AG04450 (cell line): ENCODE measurements at regions of chr7 and their contacts with region 1.

Region 1: GRCh38 chr7:12686894-12687717 is at the start of gene ARL4A:
- DNase-seq: peak; percentile 96
- H3K4me3 ChIP-seq: peak within 1 kb of the TSS; percentile 88
- H3K27ac ChIP-seq: peak within 1 kb of the TSS; percentile 79
- H3K27me3 ChIP-seq: no peaks in the 10 kb centered on the region
- CTCF ChIP-seq: peak; percentile 29; the same call in 1 of the 2 replicates
- polyA plus RNA-seq, gene ARL4A: 18.3 and 31.0 TPM in 2 replicates

Region 2: GRCh38 chr7:11261519-11261958 is 1425.6 kb before region 1 on chr7:
- CTCF ChIA-PET with region 1: no interaction called
- POLR2A ChIA-PET with region 1: no interaction called
- DNase-seq: no peak
- H3K4me3 ChIP-seq: no peak overlapping the region
- H3K27ac ChIP-seq: no peak overlapping the region
- H3K27me3 ChIP-seq: no peaks in the 10 kb centered on the region
- CTCF ChIP-seq: no peak

Region 3: DNA sequence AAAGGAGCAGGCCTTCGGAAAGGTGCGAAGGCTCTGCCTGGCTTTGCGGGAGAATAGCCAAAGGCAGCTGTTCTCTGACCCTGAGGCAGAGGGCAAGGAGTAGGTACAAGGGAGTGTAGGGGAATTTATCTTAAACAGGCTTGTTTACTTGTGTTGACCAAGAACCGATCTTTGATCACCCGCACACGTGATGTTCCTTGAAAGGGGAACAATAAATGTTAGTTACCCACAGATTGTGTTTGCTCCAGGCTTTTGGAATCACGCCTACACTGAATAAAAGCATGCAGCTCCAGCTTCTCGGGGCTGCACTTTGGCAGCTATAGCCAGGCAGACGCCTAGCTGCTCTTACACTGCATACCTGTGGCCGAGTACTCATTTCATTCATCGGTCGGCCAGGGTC is 1292.7 kb before region 1 on chr7:
- CTCF ChIA-PET with region 1: no interaction called
- POLR2A ChIA-PET with region 1: no interaction called
- DNase-seq: no peak
- H3K4me3 ChIP-seq: no peak overlapping the region
- H3K27ac ChIP-seq: no peak overlapping the region
- H3K27me3 ChIP-seq: no peaks in the 10 kb centered on the region
- CTCF ChIP-seq: no peak

Region 4: DNA sequence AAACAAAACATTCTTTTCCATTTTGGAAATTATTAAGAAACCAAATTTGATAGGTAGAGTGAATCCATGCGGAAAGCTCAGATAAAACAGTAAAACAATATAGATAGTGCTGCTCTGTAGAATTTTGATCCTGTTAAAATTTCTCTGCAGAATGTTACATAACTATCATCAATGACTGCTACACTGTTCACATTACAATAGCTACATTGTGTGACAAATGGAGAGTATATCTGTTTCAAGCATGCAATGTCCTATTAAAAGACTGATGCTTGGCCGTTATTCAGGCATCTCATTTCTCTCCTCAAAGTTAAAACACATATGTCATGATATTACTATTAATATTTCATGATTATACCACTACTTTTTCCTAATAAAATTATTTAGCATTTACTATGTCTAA is 490.7 kb before region 1 on chr7:
- CTCF ChIA-PET with region 1: no interaction called
- POLR2A ChIA-PET with region 1: no interaction called
- DNase-seq: no peak
- H3K4me3 ChIP-seq: no peak overlapping the region
- H3K27ac ChIP-seq: no peak overlapping the region
- H3K27me3 ChIP-seq: no peaks in the 10 kb centered on the region
- CTCF ChIP-seq: no peak

Region 5: DNA sequence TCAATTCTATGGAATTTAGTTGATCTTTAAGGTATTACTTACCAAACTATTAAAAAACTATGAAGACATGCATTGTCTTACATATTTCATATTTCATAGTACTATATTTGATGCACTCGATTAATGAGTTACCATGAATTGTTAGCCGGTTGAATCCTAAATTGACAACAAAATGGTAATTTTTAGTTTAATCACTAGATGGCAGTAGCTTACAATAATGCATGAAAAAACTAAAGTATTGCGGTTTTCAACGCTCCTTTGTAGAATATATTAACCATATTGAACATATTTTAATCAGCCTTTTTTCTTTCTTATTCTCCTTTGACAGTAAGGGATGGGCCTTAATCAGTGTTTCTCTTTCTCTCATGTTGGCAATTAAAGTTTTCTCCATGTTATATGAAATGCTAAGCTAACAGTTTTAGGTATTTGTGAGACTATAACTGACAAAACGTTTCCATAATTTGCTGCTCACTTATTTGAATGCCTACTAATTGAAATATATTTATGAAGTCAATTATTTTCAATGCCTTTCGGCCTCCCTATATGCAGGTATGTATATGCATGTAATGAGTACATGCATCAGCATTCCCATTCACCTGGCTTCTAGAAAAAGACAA is 48.1 kb before region 1 on chr7:
- CTCF ChIA-PET with region 1: interaction called, 22 read pairs
- POLR2A ChIA-PET with region 1: no interaction called
- DNase-seq: no peak
- H3K4me3 ChIP-seq: no peak overlapping the region
- H3K27ac ChIP-seq: no peak overlapping the region
- H3K27me3 ChIP-seq: no peaks in the 10 kb centered on the region
- CTCF ChIP-seq: peak; percentile 62

Region 6: DNA sequence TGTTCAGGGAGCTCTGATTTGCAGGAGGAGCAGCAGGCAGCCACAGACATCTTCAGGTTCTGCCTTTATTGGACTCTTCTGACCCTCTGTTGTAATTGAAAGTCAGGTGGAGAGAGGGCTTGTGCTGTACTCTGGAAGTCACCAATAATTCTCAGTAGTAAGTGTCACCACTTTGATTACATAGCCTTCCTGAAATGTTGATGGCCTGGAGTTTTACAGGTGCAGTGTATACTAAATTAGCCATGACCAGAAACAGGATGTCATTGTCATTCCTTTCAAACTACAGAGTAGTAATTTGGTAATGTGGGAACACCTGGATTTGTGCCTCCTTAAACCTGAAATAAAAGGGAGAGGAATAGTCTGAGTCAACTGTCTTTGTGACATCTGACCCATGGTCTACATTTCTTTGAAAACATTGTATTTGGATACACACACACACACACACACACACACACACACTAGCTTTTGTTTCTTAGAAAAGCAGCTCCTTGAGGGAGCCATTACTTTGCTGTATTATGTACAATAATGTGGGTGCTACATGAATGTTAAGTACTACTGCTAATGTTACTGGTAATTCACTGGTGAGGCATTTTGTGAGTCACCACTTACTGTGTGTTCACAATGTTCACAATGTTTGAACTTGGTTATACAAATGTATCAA is 19.9 kb after region 1 on chr7:
- CTCF ChIA-PET with region 1: interaction called, 10 read pairs
- POLR2A ChIA-PET with region 1: interaction called, 5 read pairs
- DNase-seq: no peak
- H3K4me3 ChIP-seq: no peak overlapping the region
- H3K27ac ChIP-seq: no peak overlapping the region
- H3K27me3 ChIP-seq: no peaks in the 10 kb centered on the region
- CTCF ChIP-seq: no peak

Region 7: DNA sequence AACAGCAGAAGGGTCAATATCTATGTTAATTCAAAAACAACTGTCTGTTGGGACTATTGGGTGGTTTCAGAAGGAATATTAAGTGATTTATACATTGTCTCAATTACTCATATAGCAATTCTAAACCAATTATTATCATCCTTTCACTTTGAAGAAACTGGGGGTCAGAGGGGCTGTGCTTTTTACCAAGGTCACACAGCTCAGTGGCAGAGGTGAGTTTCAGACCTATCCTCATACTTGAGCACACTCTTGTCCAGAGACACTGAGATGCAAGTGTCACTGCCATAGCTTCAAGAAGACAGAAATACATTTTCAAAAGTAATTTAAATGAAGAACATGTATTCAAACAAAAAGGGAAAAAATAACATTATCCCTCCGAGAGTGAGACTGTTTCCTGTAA is 195.6 kb after region 1 on chr7:
- CTCF ChIA-PET with region 1: interaction called, 10 read pairs
- POLR2A ChIA-PET with region 1: no interaction called
- DNase-seq: no peak
- H3K4me3 ChIP-seq: no peak overlapping the region
- H3K27ac ChIP-seq: no peak overlapping the region
- H3K27me3 ChIP-seq: no peaks in the 10 kb centered on the region
- CTCF ChIP-seq: no peak

Region 8: GRCh38 chr7:13077466-13077865 is 390.4 kb after region 1 on chr7:
- CTCF ChIA-PET with region 1: interaction called, 10 read pairs
- POLR2A ChIA-PET with region 1: no interaction called
- DNase-seq: no peak
- H3K4me3 ChIP-seq: no peak overlapping the region
- H3K27ac ChIP-seq: no peak overlapping the region
- H3K27me3 ChIP-seq: no peaks in the 10 kb centered on the region
- CTCF ChIP-seq: no peak

Region 9: DNA sequence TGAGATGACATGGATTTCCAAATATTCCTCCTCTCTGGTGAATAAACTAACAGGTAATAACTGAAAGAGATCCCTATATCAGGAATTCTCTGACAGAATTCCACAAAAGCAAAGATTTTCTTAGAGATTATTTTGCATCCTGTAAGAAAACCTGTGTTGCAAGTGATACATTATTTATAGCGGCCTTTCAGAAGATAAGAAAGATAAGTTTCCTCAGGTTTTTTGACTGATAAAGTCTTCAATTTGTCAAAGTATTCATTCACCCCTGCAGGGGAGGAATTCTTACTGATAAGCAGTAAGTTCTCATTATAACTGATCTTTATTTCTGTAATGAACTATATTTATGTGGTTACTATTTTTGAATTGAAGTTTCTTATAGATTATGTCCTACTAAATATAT is 554.3 kb after region 1 on chr7:
- CTCF ChIA-PET with region 1: interaction called, 10 read pairs
- POLR2A ChIA-PET with region 1: no interaction called
- DNase-seq: no peak
- H3K4me3 ChIP-seq: no peak overlapping the region
- H3K27ac ChIP-seq: no peak overlapping the region
- H3K27me3 ChIP-seq: no peaks in the 10 kb centered on the region
- CTCF ChIP-seq: no peak

Region 10: DNA sequence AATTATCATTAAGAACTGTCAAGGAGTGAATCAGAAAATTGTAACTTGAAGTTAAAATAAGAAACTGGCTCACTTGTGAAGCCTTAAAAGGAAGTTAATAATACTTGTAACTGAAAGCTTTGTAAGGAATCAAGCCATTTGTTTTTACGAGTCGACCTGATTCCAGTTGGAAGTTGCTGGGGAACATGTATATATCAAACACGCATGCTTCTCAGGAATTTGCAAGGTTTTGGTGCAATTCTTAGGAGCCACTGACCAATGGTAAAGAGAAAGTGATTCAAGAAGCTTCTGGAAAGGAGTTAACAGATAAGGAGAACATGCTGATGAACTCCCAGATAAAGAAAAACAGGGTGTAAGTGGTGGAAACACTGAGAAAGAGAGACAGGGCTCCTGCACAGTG is 1246.0 kb after region 1 on chr7:
- CTCF ChIA-PET with region 1: no interaction called
- POLR2A ChIA-PET with region 1: no interaction called
- DNase-seq: no peak
- H3K4me3 ChIP-seq: no peak overlapping the region
- H3K27ac ChIP-seq: no peak overlapping the region
- H3K27me3 ChIP-seq: no peaks in the 10 kb centered on the region
- CTCF ChIP-seq: no peak